K562 (cell line): ENCODE measurements at regions of chr2 and their contacts with region 1.

Region 1: DNA sequence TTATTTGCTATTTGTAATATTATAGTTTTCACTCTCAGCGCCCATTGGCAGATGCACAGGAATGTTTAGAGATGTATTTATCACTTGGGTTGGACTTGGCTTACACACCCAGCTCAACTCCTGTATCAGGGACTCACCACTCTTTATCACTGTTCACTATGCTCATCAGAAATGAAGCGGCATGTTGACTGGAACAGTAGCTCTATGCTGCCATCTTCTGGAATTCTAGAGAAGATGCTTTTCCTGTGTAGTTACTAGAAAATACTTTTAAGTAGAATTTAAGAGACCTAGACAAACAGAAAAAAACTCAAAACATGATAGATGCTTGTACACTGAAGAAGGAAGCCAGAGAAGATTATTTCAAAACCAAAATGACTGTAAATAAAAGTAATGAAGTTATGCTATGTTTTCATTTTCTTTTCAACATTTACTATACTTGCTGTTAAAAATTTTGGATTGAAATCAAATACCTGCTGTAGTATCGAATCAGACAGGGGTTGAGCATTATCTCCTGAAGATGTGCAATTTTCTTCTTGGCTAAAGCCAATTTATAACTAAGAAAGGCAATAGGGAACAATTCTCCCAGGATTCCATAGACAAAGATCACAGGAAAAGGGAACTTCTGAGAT is 47.4 kb upstream of the NXPH2 start:
- DNase-seq: peak; percentile 13 to 67 (median 32)
- ATAC-seq: peak; percentile 81
- H3K4me3 ChIP-seq: no peak overlapping the region
- H3K27ac ChIP-seq: no peak overlapping the region
- H3K4me1 ChIP-seq: no peaks in the 10 kb centered on the region
- H3K27me3 ChIP-seq: no peaks in the 10 kb centered on the region; a peak in 1 of 5 replicates
- CTCF ChIP-seq: peak; percentile 39 to 75 (median 45); a peak in 5 of 6 replicates
- EP300 ChIP-seq: no peak
- POLR2A ChIP-seq: no peak
- RAD21 ChIP-seq: peak; percentile 85 to 86

Region 2: GRCh38 chr2:137888845-137889244 is 938.7 kb before region 1 on chr2:
- CTCF ChIA-PET with region 1: no interaction called
- POLR2A ChIA-PET with region 1: no interaction called
- in situ Hi-C with region 1: no loop called
- intact Hi-C with region 1: loop called (anchors 1 kb)
- DNase-seq: peak in 2 of 4 experiments; percentile 21 to 46
- ATAC-seq: 0 out of 3 replicates have a peak, but pooled peaks have one; percentile 33
- H3K4me3 ChIP-seq: no peak overlapping the region
- H3K27ac ChIP-seq: no peak overlapping the region
- H3K4me1 ChIP-seq: no peaks in the 10 kb centered on the region
- H3K27me3 ChIP-seq: no peaks in the 10 kb centered on the region
- CTCF ChIP-seq: peak; percentile 38 to 71 (median 53)
- EP300 ChIP-seq: no peak
- POLR2A ChIP-seq: no peak
- RAD21 ChIP-seq: peak in 1 of 2 experiments; percentile 60; a peak in 3 of 4 replicates

Region 3: GRCh38 chr2:137947728-137948336 is 879.7 kb before region 1 on chr2:
- CTCF ChIA-PET with region 1: interaction called, 4 read pairs
- POLR2A ChIA-PET with region 1: no interaction called
- in situ Hi-C with region 1: no loop called
- intact Hi-C with region 1: loop called (anchors 5 kb)
- DNase-seq: peak; percentile 48 to 81 (median 58)
- ATAC-seq: peak; percentile 85
- H3K4me3 ChIP-seq: no peak overlapping the region
- H3K27ac ChIP-seq: no peak overlapping the region
- H3K4me1 ChIP-seq: peaks cover 4 to 19% of the 10 kb centered on the region in 2 experiments; a peak in 3 of 5 replicates
- H3K27me3 ChIP-seq: no peaks in the 10 kb centered on the region
- CTCF ChIP-seq: peak; percentile 67 to 85 (median 68)
- EP300 ChIP-seq: no peak
- POLR2A ChIP-seq: no peak
- RAD21 ChIP-seq: peak; percentile 93 to 97

Region 4: DNA sequence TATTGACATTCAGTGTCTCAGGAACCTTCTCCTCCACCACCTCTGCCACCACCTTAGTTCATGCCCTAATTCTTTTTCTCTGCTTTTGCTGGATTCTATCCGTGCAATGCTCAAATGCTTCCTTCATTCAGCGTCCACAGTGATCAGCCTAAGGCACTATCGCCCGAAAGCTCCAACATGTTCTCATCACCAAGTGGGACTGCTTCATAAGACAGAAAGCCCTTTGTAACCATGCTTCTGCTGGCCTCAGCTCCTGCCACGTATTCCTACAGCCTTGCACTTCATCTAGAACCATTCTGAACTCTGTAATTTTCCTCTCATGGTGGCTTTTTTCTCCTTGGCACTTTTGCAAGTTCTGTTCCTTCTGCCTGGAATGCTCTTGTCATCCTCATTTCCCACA is 640.3 kb before region 1 on chr2:
- CTCF ChIA-PET with region 1: no interaction called
- POLR2A ChIA-PET with region 1: interaction called, 3 read pairs
- in situ Hi-C with region 1: no loop called
- intact Hi-C with region 1: loop called (anchors 5 kb)
- DNase-seq: no peak
- ATAC-seq: no peak
- H3K4me3 ChIP-seq: no peak overlapping the region
- H3K27ac ChIP-seq: no peak overlapping the region
- H3K4me1 ChIP-seq: no peaks in the 10 kb centered on the region
- H3K27me3 ChIP-seq: no peaks in the 10 kb centered on the region
- CTCF ChIP-seq: no peak
- EP300 ChIP-seq: no peak
- POLR2A ChIP-seq: no peak
- RAD21 ChIP-seq: no peak